ENCODE measurements at regions of chr4 and their contacts with region 1.

Region 1: GRCh38 chr4:7055111-7055989 is 12.2 kb downstream of the TADA2B start:
- DNase-seq: peak; percentile 27
- H3K4me3 ChIP-seq: no peak overlapping the region
- H3K27ac ChIP-seq: peak overlapping the region; percentile 40
- H3K4me1 ChIP-seq: peaks cover 13% of the 10 kb centered on the region
- H3K27me3 ChIP-seq: no peaks in the 10 kb centered on the region
- CTCF ChIP-seq: no peak
- POLR2A ChIP-seq: no peak

Region 2: DNA sequence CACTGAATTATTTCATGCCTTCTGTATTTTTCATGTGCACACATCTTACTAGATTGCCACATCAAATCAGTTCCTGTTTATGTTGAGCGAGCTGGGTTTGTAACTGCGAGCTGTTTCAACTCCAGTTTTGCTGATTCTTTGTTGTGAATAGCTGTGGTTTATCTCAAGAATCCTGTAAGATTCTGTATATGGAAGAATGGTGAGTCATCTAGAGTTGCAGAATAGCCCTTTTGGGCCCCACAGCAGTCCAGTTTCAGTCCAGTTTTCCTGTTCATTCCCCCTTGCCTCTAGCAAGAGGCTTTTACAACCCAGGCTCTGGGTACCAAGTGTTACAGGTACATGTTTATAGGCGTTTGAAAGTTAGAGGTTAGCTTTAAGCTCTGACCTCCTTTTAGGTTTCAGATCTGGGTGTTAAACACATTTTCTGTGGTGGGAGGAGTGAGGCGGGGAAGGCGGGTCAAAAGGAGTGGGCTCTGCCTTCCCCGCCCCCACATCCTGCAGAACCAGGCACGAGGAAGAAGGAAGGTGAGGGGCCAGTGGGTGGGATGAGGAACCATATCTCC is 113.0 kb before region 1 on chr4:
- CTCF ChIA-PET with region 1: no interaction called
- POLR2A ChIA-PET with region 1: no interaction called
- dilution Hi-C with region 1: no loop called
- intact Hi-C with region 1: no loop called
- DNase-seq: peak; percentile 79
- H3K4me3 ChIP-seq: no peak overlapping the region
- H3K27ac ChIP-seq: no peak overlapping the region
- H3K4me1 ChIP-seq: peaks cover 21% of the 10 kb centered on the region
- H3K27me3 ChIP-seq: no peaks in the 10 kb centered on the region
- CTCF ChIP-seq: no peak
- POLR2A ChIP-seq: no peak

Region 3: GRCh38 chr4:7067452-7068278 is 12.3 kb after region 1 on chr4 and contains the start of gene GRPEL1:
- CTCF ChIA-PET with region 1: interaction called, 16 read pairs
- POLR2A ChIA-PET with region 1: interaction called, 6 read pairs
- dilution Hi-C with region 1: no loop called
- intact Hi-C with region 1: no loop called
- DNase-seq: peak; percentile 100
- H3K4me3 ChIP-seq: peak within 1 kb of the TSS; percentile 62 to 99 (median 71)
- H3K27ac ChIP-seq: peak within 1 kb of the TSS; percentile 57
- H3K4me1 ChIP-seq: peaks cover 20% of the 10 kb centered on the region
- H3K27me3 ChIP-seq: peaks cover 0 to 3% of the 10 kb centered on the region in 2 experiments
- CTCF ChIP-seq: no peak
- POLR2A ChIP-seq: peak; percentile 94
- total RNA-seq, gene GRPEL1: 42.6 and 47.3 TPM in 2 replicates